ENCODE measurements at regions of chr10 and their contacts with region 1.

Region 1: GRCh38 chr10:63629363-63630084 is 108.3 kb downstream of the REEP3 start:
- DNase-seq: peak; percentile 96
- H3K4me3 ChIP-seq: peak overlapping the region; percentile 62
- H3K27me3 ChIP-seq: no peaks in the 10 kb centered on the region
- CTCF ChIP-seq: peak; percentile 86

Region 2: GRCh38 chr10:63217120-63217605 is 412.4 kb before region 1 on chr10:
- CTCF ChIA-PET with region 1: interaction called, 28 read pairs
- POLR2A ChIA-PET with region 1: no interaction called
- DNase-seq: peak; percentile 19
- H3K4me3 ChIP-seq: no peak overlapping the region
- H3K27me3 ChIP-seq: no peaks in the 10 kb centered on the region
- CTCF ChIP-seq: peak; percentile 62

Region 3: GRCh38 chr10:63521416-63522276 is 107.9 kb before region 1 on chr10:
- CTCF ChIA-PET with region 1: interaction called, 11 read pairs
- POLR2A ChIA-PET with region 1: no interaction called
- DNase-seq: no peak
- H3K4me3 ChIP-seq: peak overlapping the region; percentile 67
- H3K27me3 ChIP-seq: no peaks in the 10 kb centered on the region
- CTCF ChIP-seq: no peak

Region 4: GRCh38 chr10:63595072-63595471 is 34.5 kb before region 1 on chr10:
- CTCF ChIA-PET with region 1: no interaction called
- POLR2A ChIA-PET with region 1: no interaction called
- DNase-seq: no peak
- H3K4me3 ChIP-seq: no peak overlapping the region
- H3K27me3 ChIP-seq: no peaks in the 10 kb centered on the region
- CTCF ChIP-seq: no peak